Endothelial cell of umbilical vein (primary cell): ENCODE measurements at regions of chr1 and their contacts with region 1.

Region 1: DNA sequence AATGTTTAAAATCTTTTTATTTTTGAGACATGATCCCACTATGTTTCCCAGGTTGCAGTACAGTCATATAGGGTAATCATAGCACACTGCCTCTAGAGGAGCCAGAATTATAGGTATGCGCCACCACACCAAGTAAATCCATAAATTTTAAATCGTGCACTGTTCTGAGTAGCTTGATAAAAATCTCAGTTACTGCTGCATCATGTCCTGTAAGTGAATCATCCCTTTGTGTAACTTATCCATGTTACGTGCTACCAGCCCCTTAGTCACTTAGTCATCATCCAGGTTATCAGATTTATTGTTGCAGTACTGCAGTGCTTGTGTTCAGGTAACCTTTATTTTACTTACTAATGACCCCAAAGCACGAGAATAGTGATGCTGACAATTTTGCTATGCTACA is 1770.9 kb downstream of the BRINP3 start:
- DNase-seq: peak; percentile 94
- H3K4me3 ChIP-seq: no peak overlapping the region
- H3K27ac ChIP-seq: peak overlapping the region; percentile 93
- H3K4me1 ChIP-seq: peaks cover 25% of the 10 kb centered on the region
- H3K27me3 ChIP-seq: no peaks in the 10 kb centered on the region
- CTCF ChIP-seq: peak; percentile 20 to 26
- POLR2A ChIP-seq: no peak

Region 2: GRCh38 chr1:187691439-187691838 is 1015.3 kb before region 1 on chr1:
- CTCF ChIA-PET with region 1: no interaction called
- POLR2A ChIA-PET with region 1: no interaction called
- dilution Hi-C with region 1: no loop called
- intact Hi-C with region 1: loop called (anchors 10 kb)
- DNase-seq: peak; percentile 86
- H3K4me3 ChIP-seq: no peak overlapping the region
- H3K27ac ChIP-seq: no peak overlapping the region
- H3K4me1 ChIP-seq: peaks cover 10% of the 10 kb centered on the region
- H3K27me3 ChIP-seq: no peaks in the 10 kb centered on the region
- CTCF ChIP-seq: no peak
- POLR2A ChIP-seq: peak; percentile 51

Region 3: DNA sequence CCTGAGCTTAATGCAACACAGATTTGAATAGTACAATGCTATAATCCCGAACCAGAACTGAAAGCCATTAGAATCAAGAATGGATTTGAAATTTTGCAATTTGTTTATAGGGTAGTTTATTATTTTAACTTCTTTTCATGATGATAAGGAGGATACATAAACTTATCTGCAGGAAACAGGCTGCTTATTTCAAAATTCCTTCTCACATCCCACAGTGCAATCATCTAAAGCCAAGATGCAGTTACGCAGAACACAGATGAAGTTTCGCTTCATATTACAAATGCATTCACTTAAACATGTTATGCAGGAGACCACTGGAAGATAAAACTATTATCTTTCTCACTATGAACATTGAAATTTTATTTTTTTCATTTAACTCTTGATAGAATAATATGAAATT is 858.4 kb before region 1 on chr1:
- CTCF ChIA-PET with region 1: no interaction called
- POLR2A ChIA-PET with region 1: no interaction called
- dilution Hi-C with region 1: no loop called
- intact Hi-C with region 1: loop called (anchors 2 kb)
- DNase-seq: peak; percentile 87
- H3K4me3 ChIP-seq: no peak overlapping the region
- H3K27ac ChIP-seq: peak overlapping the region; percentile 21
- H3K4me1 ChIP-seq: peaks cover 6% of the 10 kb centered on the region
- H3K27me3 ChIP-seq: no peaks in the 10 kb centered on the region
- CTCF ChIP-seq: no peak
- POLR2A ChIP-seq: no peak

Region 4: DNA sequence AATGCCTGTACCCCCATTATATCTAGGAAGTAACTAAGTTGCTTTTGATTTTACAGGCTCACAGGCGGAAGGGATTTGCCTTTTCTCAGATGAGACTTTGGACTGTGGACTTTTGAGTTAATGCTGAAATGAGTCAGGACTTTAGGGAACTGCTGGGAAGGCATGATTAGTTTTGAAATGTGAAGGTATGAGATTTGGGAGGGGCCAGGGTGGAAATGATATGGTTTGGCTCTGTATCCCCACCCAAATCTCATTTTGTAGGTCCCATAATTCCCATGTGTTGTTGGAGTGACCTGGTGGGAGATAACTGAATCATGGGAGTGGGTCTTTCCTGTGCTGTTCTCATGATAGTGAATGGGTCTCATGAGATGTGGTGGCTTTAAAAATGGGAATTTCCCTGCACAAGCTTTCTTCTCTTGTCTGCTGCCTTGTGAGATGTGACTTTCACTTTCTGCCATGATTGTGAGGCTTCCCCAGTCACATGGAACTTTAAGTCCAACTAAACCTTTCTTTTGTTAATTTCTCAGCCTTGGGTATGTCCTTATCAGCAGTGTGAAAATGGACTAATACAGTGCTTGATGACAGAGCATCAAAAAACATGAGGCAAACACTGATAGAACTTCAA is 758.5 kb before region 1 on chr1:
- CTCF ChIA-PET with region 1: no interaction called
- POLR2A ChIA-PET with region 1: no interaction called
- dilution Hi-C with region 1: no loop called
- intact Hi-C with region 1: no loop called
- DNase-seq: no peak
- H3K4me3 ChIP-seq: no peak overlapping the region
- H3K27ac ChIP-seq: no peak overlapping the region
- H3K4me1 ChIP-seq: no peaks in the 10 kb centered on the region
- H3K27me3 ChIP-seq: no peaks in the 10 kb centered on the region
- CTCF ChIP-seq: no peak
- POLR2A ChIP-seq: no peak

Region 5: DNA sequence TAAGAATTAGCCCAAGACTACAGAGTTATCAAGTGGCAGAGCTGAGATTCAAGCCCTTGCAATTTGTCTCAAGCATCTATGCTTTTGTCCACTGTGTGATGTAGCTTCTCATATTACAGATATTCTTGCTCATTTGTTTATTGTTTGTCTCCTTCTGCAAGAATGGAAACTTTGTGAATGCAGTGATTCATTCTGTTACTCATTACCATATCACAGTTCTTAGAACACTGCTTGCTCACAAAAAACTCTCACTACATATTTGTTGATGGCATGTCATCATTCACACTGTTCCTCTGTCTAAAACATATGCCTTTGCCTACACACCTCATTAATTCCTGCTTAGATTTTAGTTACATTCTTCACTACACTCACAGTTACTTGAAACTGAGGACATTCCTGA is 679.1 kb before region 1 on chr1:
- CTCF ChIA-PET with region 1: no interaction called
- POLR2A ChIA-PET with region 1: no interaction called
- dilution Hi-C with region 1: no loop called
- intact Hi-C with region 1: loop called (anchors 5 kb)
- DNase-seq: peak; percentile 94
- H3K4me3 ChIP-seq: no peak overlapping the region
- H3K27ac ChIP-seq: peak overlapping the region; percentile 94
- H3K4me1 ChIP-seq: peaks cover 25% of the 10 kb centered on the region
- H3K27me3 ChIP-seq: no peaks in the 10 kb centered on the region
- CTCF ChIP-seq: no peak
- POLR2A ChIP-seq: peak; percentile 28

Region 6: GRCh38 chr1:188237571-188238353 is 469.0 kb before region 1 on chr1:
- CTCF ChIA-PET with region 1: no interaction called
- POLR2A ChIA-PET with region 1: no interaction called
- dilution Hi-C with region 1: no loop called
- intact Hi-C with region 1: loop called (anchors 5 kb)
- DNase-seq: peak; percentile 79
- H3K4me3 ChIP-seq: peak overlapping the region in 1 of 3 experiments; percentile 23
- H3K27ac ChIP-seq: peak overlapping the region; percentile 73
- H3K4me1 ChIP-seq: peaks cover 24% of the 10 kb centered on the region
- H3K27me3 ChIP-seq: no peaks in the 10 kb centered on the region
- CTCF ChIP-seq: no peak
- POLR2A ChIP-seq: no peak

Region 7: GRCh38 chr1:188652678-188653077 is 54.1 kb before region 1 on chr1:
- CTCF ChIA-PET with region 1: no interaction called
- POLR2A ChIA-PET with region 1: no interaction called
- dilution Hi-C with region 1: no loop called
- intact Hi-C with region 1: loop called (anchors 1 kb)
- DNase-seq: peak; percentile 90
- H3K4me3 ChIP-seq: no peak overlapping the region
- H3K27ac ChIP-seq: peak overlapping the region; percentile 55
- H3K4me1 ChIP-seq: peaks cover 18% of the 10 kb centered on the region
- H3K27me3 ChIP-seq: no peaks in the 10 kb centered on the region
- CTCF ChIP-seq: no peak
- POLR2A ChIP-seq: no peak

Region 8: GRCh38 chr1:188723332-188724020 is 16.7 kb after region 1 on chr1:
- CTCF ChIA-PET with region 1: no interaction called
- POLR2A ChIA-PET with region 1: no interaction called
- dilution Hi-C with region 1: no loop called
- intact Hi-C with region 1: loop called (anchors 1 kb)
- DNase-seq: peak; percentile 57
- H3K4me3 ChIP-seq: no peak overlapping the region
- H3K27ac ChIP-seq: peak overlapping the region; percentile 53
- H3K4me1 ChIP-seq: peaks cover 11% of the 10 kb centered on the region
- H3K27me3 ChIP-seq: no peaks in the 10 kb centered on the region
- CTCF ChIP-seq: no peak
- POLR2A ChIP-seq: no peak

Region 9: GRCh38 chr1:188937965-188938551 is 231.3 kb after region 1 on chr1:
- CTCF ChIA-PET with region 1: no interaction called
- POLR2A ChIA-PET with region 1: no interaction called
- dilution Hi-C with region 1: no loop called
- intact Hi-C with region 1: no loop called
- DNase-seq: peak; percentile 53
- H3K4me3 ChIP-seq: no peak overlapping the region
- H3K27ac ChIP-seq: peak overlapping the region; percentile 23
- H3K4me1 ChIP-seq: no peaks in the 10 kb centered on the region
- H3K27me3 ChIP-seq: no peaks in the 10 kb centered on the region
- CTCF ChIP-seq: peak; percentile 35 to 41
- POLR2A ChIP-seq: no peak